ENCODE measurements at regions of chr2 and their contacts with region 1.

Region 1: GRCh38 chr2:233053928-233054784 is 6.0 kb upstream of the INPP5D start:
- DNase-seq: no peak
- ATAC-seq: peak; percentile 98
- H3K4me3 ChIP-seq: no peak overlapping the region
- H3K27ac ChIP-seq: no peak overlapping the region
- H3K4me1 ChIP-seq: peaks cover 2% of the 10 kb centered on the region
- H3K27me3 ChIP-seq: no peaks in the 10 kb centered on the region
- CTCF ChIP-seq: peak; percentile 87 to 97 (median 93)
- EP300 ChIP-seq: no peak
- POLR2A ChIP-seq: no peak
- RAD21 ChIP-seq: peak; percentile 74

Region 2: GRCh38 chr2:232809349-232810124 is 244.6 kb before region 1 on chr2:
- CTCF ChIA-PET with region 1: interaction called, 16 read pairs
- POLR2A ChIA-PET with region 1: no interaction called
- RAD21 ChIA-PET with region 1: interaction called, 4 read pairs
- SMC1A ChIA-PET with region 1: interaction called, 7 read pairs
- in situ Hi-C with region 1: no loop called
- intact Hi-C with region 1: no loop called
- DNase-seq: no peak
- ATAC-seq: no peak
- H3K4me3 ChIP-seq: no peak overlapping the region
- H3K27ac ChIP-seq: no peak overlapping the region
- H3K4me1 ChIP-seq: no peaks in the 10 kb centered on the region
- H3K27me3 ChIP-seq: no peaks in the 10 kb centered on the region
- CTCF ChIP-seq: no peak; a peak in 1 of 6 replicates
- EP300 ChIP-seq: no peak
- POLR2A ChIP-seq: no peak
- RAD21 ChIP-seq: peak; percentile 4; the same call in 1 of the 2 replicates

Region 3: GRCh38 chr2:233026192-233026813 is 27.9 kb before region 1 on chr2:
- CTCF ChIA-PET with region 1: interaction called, 14 read pairs
- POLR2A ChIA-PET with region 1: no interaction called
- RAD21 ChIA-PET with region 1: no interaction called
- SMC1A ChIA-PET with region 1: interaction called, 4 read pairs
- in situ Hi-C with region 1: no loop called
- intact Hi-C with region 1: no loop called
- DNase-seq: no peak
- ATAC-seq: no peak
- H3K4me3 ChIP-seq: no peak overlapping the region
- H3K27ac ChIP-seq: no peak overlapping the region
- H3K4me1 ChIP-seq: no peaks in the 10 kb centered on the region
- H3K27me3 ChIP-seq: peaks cover 0 to 1% of the 10 kb centered on the region in 2 experiments; a peak in 1 of 4 replicates
- CTCF ChIP-seq: no peak
- EP300 ChIP-seq: no peak
- POLR2A ChIP-seq: no peak
- RAD21 ChIP-seq: no peak

Region 4: DNA sequence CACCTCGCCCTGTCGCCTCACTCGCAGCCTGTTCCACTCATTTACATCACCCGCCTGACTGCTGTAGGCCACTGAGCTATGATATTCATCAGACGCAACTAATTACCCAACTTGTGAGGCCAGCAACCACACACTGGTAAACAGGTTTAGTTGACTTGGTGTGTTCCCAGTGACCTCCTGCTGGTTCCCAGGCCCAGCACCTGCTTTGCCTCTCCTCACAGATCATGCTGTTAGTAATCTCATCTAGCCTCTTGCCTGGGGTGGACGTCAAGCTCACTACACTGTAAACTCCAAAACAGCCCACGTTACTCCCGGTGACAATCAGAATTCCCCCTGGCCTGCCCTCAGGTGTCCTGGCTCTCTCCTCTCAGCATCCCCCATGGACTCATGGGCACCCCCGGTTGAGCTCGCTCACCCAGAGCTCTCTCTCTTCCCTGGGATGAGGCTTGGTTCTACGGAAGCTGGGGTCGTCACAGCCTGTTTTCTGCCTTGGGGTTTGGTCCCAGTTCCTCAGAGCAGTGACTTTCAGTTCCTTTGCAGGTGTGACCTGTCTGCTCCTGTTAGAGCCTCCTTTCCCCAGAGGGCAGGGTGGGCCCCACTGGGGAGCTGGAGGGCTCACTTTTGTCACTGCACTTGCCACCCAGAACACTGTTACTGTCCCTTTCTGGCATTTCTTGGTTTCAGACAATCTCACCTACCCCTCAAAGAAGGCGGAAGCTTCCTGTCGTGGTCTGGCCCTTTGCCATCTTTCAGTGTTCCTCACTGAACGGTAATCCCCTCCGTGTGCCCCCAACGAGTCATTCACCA is 46.2 kb after region 1 on chr2:
- CTCF ChIA-PET with region 1: interaction called, 34 read pairs
- POLR2A ChIA-PET with region 1: interaction called, 70 read pairs
- RAD21 ChIA-PET with region 1: interaction called, 160 read pairs
- SMC1A ChIA-PET with region 1: interaction called, 10 read pairs
- in situ Hi-C with region 1: no loop called
- intact Hi-C with region 1: no loop called
- DNase-seq: peak; percentile 95
- ATAC-seq: peak; percentile 90
- H3K4me3 ChIP-seq: peak overlapping the region; percentile 35; the same call in 1 of the 2 replicates
- H3K27ac ChIP-seq: peak overlapping the region; percentile 99
- H3K4me1 ChIP-seq: peaks cover 49% of the 10 kb centered on the region
- H3K27me3 ChIP-seq: no peaks in the 10 kb centered on the region
- CTCF ChIP-seq: no peak
- EP300 ChIP-seq: peak; percentile 78 to 92; a peak in 3 of 4 replicates
- POLR2A ChIP-seq: no peak; the same call in 1 of the 2 replicates
- RAD21 ChIP-seq: peak; percentile 3; the same call in 1 of the 2 replicates

Region 5: DNA sequence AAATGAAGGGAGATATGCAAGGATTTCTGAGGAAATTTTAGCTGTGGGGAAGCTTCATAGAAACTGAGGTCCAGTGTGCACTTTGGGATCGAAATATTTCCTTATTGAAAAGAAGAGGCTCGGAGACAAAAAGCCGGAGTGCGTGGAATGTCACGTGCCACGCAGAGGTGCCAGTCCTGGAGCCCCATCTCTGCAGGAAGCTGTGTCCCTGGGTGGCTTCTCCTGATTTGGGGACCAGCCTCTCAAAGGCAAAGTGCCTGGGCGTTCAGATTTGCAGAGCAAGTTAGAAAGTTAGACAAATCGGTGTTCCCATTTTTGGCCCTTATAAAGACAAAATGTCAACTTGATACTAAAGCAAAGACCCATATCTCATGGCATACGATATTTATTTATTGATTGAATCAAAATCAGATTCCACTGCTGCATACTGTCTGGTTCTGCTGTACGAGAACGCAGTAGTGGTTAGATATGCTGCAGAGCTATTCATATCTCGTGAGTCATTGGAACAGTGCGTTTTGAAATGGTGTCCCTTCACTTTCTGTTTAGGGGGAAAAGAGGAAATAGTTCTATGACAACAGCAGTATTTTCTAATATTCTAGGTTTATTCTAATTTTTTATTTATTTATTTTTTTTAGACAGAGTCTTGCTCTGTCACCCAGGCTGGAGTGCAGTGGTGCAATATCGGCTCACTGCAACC is 188.2 kb after region 1 on chr2:
- CTCF ChIA-PET with region 1: interaction called, 14 read pairs
- POLR2A ChIA-PET with region 1: no interaction called
- RAD21 ChIA-PET with region 1: no interaction called
- SMC1A ChIA-PET with region 1: interaction called, 4 read pairs
- in situ Hi-C with region 1: no loop called
- intact Hi-C with region 1: no loop called
- DNase-seq: no peak
- ATAC-seq: peak; percentile 32; the same call in 1 of the 3 replicates
- H3K4me3 ChIP-seq: no peak overlapping the region
- H3K27ac ChIP-seq: no peak overlapping the region
- H3K4me1 ChIP-seq: peaks cover 19% of the 10 kb centered on the region
- H3K27me3 ChIP-seq: no peaks in the 10 kb centered on the region
- CTCF ChIP-seq: no peak
- EP300 ChIP-seq: no peak
- POLR2A ChIP-seq: no peak
- RAD21 ChIP-seq: no peak

Measured in GM12878 (cell line).